B cell (primary cell): ENCODE measurements at regions of chr2 and their contacts with region 1.

Region 1: GRCh38 chr2:174492963-174493431 is 6.2 kb upstream of the GPR155 start:
- DNase-seq: peak; percentile 89
- ATAC-seq: peak; percentile 95
- H3K4me3 ChIP-seq: peak overlapping the region in 3 of 5 experiments; percentile 34 to 50 (median 37)
- H3K4me3 Mint-ChIP-seq: peak overlapping the region; percentile 84
- H3K27ac ChIP-seq: peak overlapping the region; percentile 82 to 94
- H3K27ac Mint-ChIP-seq: peak overlapping the region; percentile 94
- H3K4me1 ChIP-seq: peaks cover 30 to 32% of the 10 kb centered on the region in 2 donors
- H3K4me1 Mint-ChIP-seq: peaks cover 51% of the 10 kb centered on the region
- H3K27me3 ChIP-seq: no peaks in the 10 kb centered on the region
- H3K27me3 Mint-ChIP-seq: no peaks in the 10 kb centered on the region
- CTCF ChIP-seq: no peak

Region 2: GRCh38 chr2:174428214-174428613 is 64.8 kb before region 1 on chr2:
- CTCF ChIA-PET with region 1: no interaction called
- POLR2A ChIA-PET with region 1: no interaction called
- intact Hi-C with region 1: no loop called
- DNase-seq: no peak
- ATAC-seq: no peak
- H3K4me3 ChIP-seq: no peak overlapping the region
- H3K4me3 Mint-ChIP-seq: no peak overlapping the region
- H3K27ac ChIP-seq: no peak overlapping the region
- H3K27ac Mint-ChIP-seq: no peak overlapping the region
- H3K4me1 ChIP-seq: no peaks in the 10 kb centered on the region
- H3K4me1 Mint-ChIP-seq: no peaks in the 10 kb centered on the region
- H3K27me3 ChIP-seq: no peaks in the 10 kb centered on the region
- H3K27me3 Mint-ChIP-seq: no peaks in the 10 kb centered on the region
- CTCF ChIP-seq: no peak

Region 3: DNA sequence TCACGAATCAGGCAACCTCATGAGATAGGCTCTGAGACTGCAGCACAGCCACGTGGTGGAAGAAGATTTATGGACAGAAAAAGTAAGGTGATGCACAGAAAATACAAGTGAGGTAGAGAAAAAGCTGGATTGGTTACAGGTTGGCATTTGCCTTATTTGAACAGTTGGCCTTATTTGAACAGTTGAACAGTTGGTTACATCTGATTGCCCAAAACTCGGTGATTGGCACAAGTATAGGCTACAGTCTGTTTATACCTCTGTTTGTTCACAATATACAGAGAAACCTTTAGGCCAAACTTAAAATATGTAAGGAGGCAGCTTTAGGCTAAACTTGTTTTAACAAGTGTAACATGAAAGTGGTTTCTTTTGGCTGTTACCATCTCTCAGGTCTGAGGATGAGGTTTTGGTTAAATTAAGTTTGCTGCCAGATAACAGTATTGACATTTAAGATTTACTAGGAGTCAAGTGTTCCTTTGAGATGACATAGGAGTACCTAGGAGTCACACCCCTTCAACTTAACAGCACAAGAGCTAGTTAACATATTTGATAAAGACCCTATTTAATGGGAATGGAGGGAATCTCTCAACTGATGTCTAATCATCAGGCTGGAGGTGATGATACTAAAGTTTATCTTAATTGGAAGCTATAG is 10.3 kb after region 1 on chr2:
- CTCF ChIA-PET with region 1: interaction called, 5 read pairs
- POLR2A ChIA-PET with region 1: interaction called, 10 read pairs
- intact Hi-C with region 1: no loop called
- DNase-seq: no peak
- ATAC-seq: no peak
- H3K4me3 ChIP-seq: no peak overlapping the region
- H3K4me3 Mint-ChIP-seq: no peak overlapping the region
- H3K27ac ChIP-seq: no peak overlapping the region
- H3K27ac Mint-ChIP-seq: no peak overlapping the region
- H3K4me1 ChIP-seq: no peaks in the 10 kb centered on the region
- H3K4me1 Mint-ChIP-seq: no peaks in the 10 kb centered on the region
- H3K27me3 ChIP-seq: peaks cover 0 to 3% (median 0%) of the 10 kb centered on the region in 4 experiments
- H3K27me3 Mint-ChIP-seq: peaks cover 4% of the 10 kb centered on the region
- CTCF ChIP-seq: no peak

Region 4: GRCh38 chr2:174522553-174522952 is 29.6 kb after region 1 on chr2:
- CTCF ChIA-PET with region 1: interaction called, 6 read pairs
- POLR2A ChIA-PET with region 1: no interaction called
- intact Hi-C with region 1: loop called (anchors 2 kb)
- DNase-seq: peak; percentile 31
- ATAC-seq: peak; percentile 36
- H3K4me3 ChIP-seq: no peak overlapping the region
- H3K4me3 Mint-ChIP-seq: no peak overlapping the region
- H3K27ac ChIP-seq: no peak overlapping the region
- H3K27ac Mint-ChIP-seq: peak overlapping the region; percentile 23
- H3K4me1 ChIP-seq: peaks cover 3 to 6% of the 10 kb centered on the region in 2 donors
- H3K4me1 Mint-ChIP-seq: peaks cover 18% of the 10 kb centered on the region
- H3K27me3 ChIP-seq: peaks cover 0 to 2% (median 0%) of the 10 kb centered on the region in 4 experiments
- H3K27me3 Mint-ChIP-seq: peaks cover 6% of the 10 kb centered on the region
- CTCF ChIP-seq: no peak

Region 5: GRCh38 chr2:174553811-174554493 is 61.0 kb after region 1 on chr2:
- CTCF ChIA-PET with region 1: interaction called, 3 read pairs
- POLR2A ChIA-PET with region 1: no interaction called
- intact Hi-C with region 1: loop called (anchors 2 kb)
- DNase-seq: peak; percentile 75
- ATAC-seq: peak; percentile 89
- H3K4me3 ChIP-seq: no peak overlapping the region
- H3K4me3 Mint-ChIP-seq: peak overlapping the region; percentile 75
- H3K27ac ChIP-seq: peak overlapping the region; percentile 70 to 77
- H3K27ac Mint-ChIP-seq: peak overlapping the region; percentile 92
- H3K4me1 ChIP-seq: peaks cover 33 to 36% of the 10 kb centered on the region in 2 donors
- H3K4me1 Mint-ChIP-seq: peaks cover 38% of the 10 kb centered on the region
- H3K27me3 ChIP-seq: no peaks in the 10 kb centered on the region
- H3K27me3 Mint-ChIP-seq: no peaks in the 10 kb centered on the region
- CTCF ChIP-seq: no peak